ENCODE measurements at regions of chr1 and their contacts with region 1.

Region 1: GRCh38 chr1:179882243-179883039 is at the start of gene TOR1AIP1:
- DNase-seq: peak; percentile 97
- H3K4me3 ChIP-seq: peak within 1 kb of the TSS; percentile 77 to 90 (median 85)
- H3K27ac ChIP-seq: peak within 1 kb of the TSS; percentile 99
- H3K4me1 ChIP-seq: peaks cover 4% of the 10 kb centered on the region
- H3K27me3 ChIP-seq: no peaks in the 10 kb centered on the region
- CTCF ChIP-seq: peak in 1 of 2 donors; percentile 43
- total RNA-seq, gene TOR1AIP1: 46.5 to 55.3 TPM

Region 2: DNA sequence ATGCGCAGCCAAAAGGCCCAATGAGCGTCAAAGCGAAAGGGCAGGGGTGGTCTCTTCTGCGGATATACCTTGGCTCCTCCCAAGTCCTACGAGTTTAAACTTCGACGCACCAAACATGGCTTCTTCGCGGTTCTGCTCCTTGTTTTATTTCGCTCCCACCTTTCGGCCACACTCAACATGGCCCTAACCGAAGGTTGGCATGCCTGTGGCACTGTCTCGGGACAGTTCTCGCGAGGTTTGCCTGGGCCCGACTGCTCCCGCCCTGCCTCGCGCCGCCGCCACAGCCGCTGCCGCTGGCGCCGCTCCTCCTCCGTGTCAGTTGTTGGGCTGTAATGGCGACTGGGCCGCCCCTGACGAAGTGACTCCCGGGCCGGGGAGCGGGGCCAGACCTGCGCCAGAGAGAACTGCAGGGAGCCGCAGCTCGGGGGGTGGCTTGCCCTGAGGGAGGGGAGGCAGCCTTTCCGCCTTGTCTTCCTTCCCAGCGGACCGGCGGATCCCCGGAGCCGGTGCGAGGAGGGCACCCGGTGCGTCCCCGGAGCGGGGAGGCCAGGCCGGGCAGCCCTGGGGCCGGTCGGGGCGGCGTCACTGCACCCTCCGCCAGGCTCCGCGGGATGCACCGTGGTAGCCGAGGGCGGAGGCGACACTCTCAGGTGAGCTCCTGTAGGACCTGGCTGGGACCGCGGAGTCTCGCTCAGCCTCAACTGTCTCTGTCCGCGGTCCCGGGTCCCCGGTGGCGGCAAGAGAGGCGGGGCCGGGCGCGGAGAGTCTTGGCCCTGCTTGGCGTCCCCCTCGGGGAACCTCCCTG is 72.3 kb after region 1 on chr1 and contains the start of gene CEP350:
- CTCF ChIA-PET with region 1: no interaction called
- dilution Hi-C with region 1: no loop called
- in situ Hi-C with region 1: no loop called
- intact Hi-C with region 1: loop called (anchors 2 kb)
- DNase-seq: peak; percentile 99
- H3K4me3 ChIP-seq: peak within 1 kb of the TSS; percentile 94 to 99 (median 96)
- H3K27ac ChIP-seq: peak within 1 kb of the TSS; percentile 81
- H3K4me1 ChIP-seq: peaks cover 12% of the 10 kb centered on the region
- H3K27me3 ChIP-seq: no peaks in the 10 kb centered on the region
- CTCF ChIP-seq: no peak
- total RNA-seq, gene CEP350: 29.6 to 37.5 TPM

Region 3: DNA sequence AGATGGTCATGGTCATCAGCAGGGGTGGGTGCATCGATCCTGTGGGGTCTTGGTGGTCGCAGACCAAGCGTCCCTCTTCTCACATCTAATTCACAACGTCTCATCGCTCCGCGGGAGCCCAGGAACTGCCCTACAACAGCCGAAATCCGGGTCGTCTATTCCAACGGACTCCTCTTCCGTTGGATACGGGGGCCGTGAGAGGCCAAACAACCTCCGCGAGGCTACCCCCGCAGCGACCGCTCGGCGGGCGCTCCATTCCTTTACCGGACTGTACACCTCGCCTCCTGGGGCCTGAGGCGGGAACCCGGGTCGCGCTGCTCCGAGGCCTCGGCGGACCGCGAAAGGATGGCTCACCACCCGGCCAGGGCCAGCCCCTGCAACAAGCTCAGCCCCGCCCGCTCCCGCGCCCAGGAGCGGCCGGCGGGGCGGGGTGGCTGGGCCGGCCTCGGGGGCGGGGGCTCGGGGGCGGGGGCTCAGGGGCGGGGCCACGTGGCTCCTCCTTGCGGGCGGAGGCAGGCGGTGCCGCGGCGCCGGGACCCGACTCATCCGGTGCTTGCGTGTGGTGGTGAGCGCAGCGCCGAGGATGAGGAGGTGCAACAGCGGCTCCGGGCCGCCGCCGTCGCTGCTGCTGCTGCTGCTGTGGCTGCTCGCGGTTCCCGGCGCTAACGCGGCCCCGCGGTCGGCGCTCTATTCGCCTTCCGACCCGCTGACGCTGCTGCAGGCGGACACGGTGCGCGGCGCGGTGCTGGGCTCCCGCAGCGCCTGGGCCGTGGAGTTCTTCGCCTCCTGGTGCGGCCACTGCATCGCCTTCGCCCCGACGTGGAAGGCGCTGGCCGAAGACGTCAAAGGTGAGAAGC is 272.1 kb after region 1 on chr1 and contains the start of gene QSOX1:
- CTCF ChIA-PET with region 1: no interaction called
- dilution Hi-C with region 1: no loop called
- in situ Hi-C with region 1: loop called in 1 of 2 experiments (anchors 10 kb)
- intact Hi-C with region 1: no loop called
- DNase-seq: peak; percentile 84
- H3K4me3 ChIP-seq: peak within 1 kb of the TSS; percentile 83 to 92 (median 83)
- H3K27ac ChIP-seq: peak within 1 kb of the TSS; percentile 50
- H3K4me1 ChIP-seq: peaks cover 34% of the 10 kb centered on the region
- H3K27me3 ChIP-seq: no peaks in the 10 kb centered on the region
- CTCF ChIP-seq: no peak
- total RNA-seq, gene QSOX1: 92.4 to 120 TPM

Region 4: DNA sequence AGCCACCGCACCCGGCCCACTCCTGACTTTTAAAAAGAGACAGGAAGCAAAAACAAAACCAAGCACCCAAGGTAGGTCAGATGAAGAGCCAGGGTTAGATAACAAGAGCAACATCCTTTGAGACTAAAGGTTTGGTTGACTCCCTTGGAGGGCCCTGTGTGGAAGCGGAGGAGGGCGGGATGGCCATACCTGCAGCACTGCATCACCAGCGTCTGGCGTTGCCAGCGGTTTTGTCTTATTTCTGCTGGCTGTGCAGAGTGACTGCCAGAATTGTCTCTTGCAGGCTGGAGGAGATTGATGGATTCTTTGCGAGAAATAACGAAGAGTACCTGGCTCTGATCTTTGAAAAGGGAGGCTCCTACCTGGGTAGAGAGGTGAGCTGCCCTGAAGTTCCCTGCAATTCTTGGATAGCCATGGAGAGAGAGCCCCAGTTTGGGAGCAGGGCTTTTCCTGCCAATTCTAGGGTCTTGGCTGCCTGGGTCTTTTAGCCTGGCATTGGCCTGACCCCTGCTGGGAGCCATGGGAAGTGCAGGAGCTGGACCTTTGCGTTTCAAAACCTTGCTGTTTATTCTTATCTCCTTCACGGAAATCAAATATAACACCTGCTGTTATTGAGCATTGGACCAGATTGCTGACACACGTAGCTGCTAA is 296.2 kb after region 1 on chr1:
- CTCF ChIA-PET with region 1: no interaction called
- dilution Hi-C with region 1: no loop called
- in situ Hi-C with region 1: no loop called
- intact Hi-C with region 1: loop called (anchors 5 kb)
- DNase-seq: no peak
- H3K4me3 ChIP-seq: no peak overlapping the region
- H3K27ac ChIP-seq: no peak overlapping the region
- H3K4me1 ChIP-seq: no peaks in the 10 kb centered on the region
- H3K27me3 ChIP-seq: no peaks in the 10 kb centered on the region
- CTCF ChIP-seq: peak; percentile 98